ENCODE measurements at regions of chr15 and their contacts with region 1.

Region 1: GRCh38 chr15:42457445-42458442 is 33.2 kb downstream of the ZNF106 start:
- DNase-seq: peak; percentile 90

Region 2: DNA sequence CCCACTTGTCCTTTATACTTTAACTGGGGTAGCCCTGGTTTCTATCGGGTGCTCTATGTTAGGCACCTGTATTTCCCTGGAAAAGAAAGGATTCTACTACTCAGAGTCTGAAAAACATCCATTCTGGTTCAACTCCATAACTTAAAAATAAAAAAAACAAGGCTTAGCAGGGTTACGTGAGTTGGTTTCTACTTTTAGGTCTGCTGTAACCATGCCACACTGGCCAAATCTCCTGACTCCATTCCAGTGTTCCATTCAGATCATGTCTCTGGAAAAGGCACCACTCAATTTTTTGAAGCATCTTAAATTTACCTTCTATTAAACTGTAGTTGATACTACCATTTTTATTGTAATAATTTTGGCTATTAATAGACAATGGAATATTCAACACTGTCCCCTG is 36.4 kb before region 1 on chr15:
- intact Hi-C with region 1: loop called (anchors 5 kb)
- DNase-seq: no peak

Region 3: DNA sequence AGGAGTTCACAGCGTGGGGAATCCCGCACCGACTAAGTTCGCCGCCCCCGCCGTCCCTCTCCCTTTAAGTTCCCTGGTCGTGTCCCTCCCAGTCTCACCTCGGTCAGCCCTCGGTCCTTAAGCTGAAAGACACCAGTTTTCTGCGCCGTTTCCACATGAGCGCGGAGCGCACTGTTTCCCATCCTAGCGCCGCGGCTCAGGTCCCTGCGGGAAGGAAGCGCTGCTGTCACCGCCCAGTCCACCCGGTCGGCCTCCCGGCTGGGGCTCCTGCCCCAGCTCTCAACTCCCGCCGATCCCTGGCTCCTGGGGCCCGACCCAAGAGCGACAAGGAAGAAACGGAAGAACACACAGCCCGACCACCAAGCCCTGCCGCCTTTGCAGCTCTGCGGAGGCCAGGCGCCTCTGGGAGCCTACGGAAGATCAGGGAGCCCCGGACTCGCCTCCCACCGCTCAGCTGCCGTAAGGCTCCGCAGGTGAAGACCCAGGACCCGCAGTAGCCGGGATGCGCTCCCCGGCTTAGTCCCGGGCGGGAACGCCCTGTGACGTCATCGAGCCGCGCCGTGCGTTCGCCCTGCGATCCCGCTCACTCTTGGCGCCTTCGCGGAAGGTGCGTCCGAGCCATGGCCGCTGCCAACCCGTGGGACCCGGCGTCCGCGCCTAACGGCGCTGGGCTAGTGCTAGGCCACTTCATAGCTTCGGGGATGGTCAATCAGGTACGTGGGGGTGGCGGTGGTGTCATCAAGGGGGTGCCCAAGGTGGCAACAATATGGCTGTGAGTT is 90.7 kb after region 1 on chr15 and contains the starts of genes HAUS2 and LRRC57:
- intact Hi-C with region 1: no loop called
- DNase-seq: peak; percentile 95
- total RNA-seq, gene HAUS2: 14.7 TPM
- total RNA-seq, gene LRRC57: 16.9 TPM